ENCODE measurements at regions of chr20 and their contacts with region 1.

Region 1: DNA sequence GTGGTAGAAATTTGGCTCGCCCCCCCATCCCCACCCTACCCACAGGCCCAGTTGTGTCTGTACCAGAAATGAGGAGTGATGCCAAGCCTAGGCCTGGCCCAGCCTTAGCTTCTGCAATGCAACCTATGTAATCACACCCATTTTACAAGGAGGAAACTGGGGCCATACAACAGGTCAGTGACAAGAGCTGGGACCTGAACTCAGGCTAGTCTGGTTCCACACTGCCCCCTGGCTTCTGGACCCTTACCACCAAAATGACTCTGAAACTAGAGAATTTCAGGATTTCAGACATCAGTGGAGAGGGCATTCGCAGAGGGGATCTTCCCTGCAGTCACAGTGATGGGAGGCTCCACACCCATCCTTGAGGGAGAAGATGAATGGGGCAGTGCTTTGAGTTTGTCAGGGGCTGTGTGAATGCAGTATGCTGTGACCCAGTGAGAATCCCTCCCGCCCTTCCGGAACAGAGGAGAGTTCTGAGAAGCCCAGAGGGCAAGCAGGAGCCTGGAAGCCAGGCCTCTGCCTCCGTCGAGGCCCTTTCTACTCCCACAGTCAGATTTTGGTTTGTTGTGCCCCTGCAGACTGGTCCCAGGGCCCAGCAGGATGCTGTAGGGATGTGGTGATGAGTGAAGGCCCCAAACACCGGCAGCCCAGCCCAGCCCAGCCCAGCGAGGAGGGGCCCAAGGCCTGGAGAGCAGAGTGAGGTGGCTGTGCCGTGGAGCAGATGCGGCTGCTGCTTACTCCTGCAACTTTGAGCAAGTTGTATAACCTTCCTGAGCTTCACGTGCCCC is 48.1 kb upstream of the MYL9 start:
- DNase-seq: no peak
- H3K4me3 Mint-ChIP-seq: no peak overlapping the region
- H3K27ac Mint-ChIP-seq: peak overlapping the region; percentile 28
- H3K4me1 Mint-ChIP-seq: peaks cover 28% of the 10 kb centered on the region
- H3K27me3 Mint-ChIP-seq: no peaks in the 10 kb centered on the region

Region 2: GRCh38 chr20:36519944-36520343 is 26.7 kb after region 1 on chr20:
- intact Hi-C with region 1: loop called (anchors 2 kb)
- DNase-seq: no peak
- H3K4me3 Mint-ChIP-seq: no peak overlapping the region
- H3K27ac Mint-ChIP-seq: peak overlapping the region; percentile 87
- H3K4me1 Mint-ChIP-seq: peaks cover 20% of the 10 kb centered on the region
- H3K27me3 Mint-ChIP-seq: no peaks in the 10 kb centered on the region